Mammary epithelial cell (primary cell): ENCODE measurements at regions of chr2 and their contacts with region 1.

Region 1: GRCh38 chr2:105344704-105345345 is 7.5 kb downstream of the C2orf49 start:
- DNase-seq: no peak
- H3K4me3 ChIP-seq: no peak overlapping the region
- H3K27ac ChIP-seq: no peak overlapping the region
- H3K4me1 ChIP-seq: no peaks in the 10 kb centered on the region
- H3K27me3 ChIP-seq: no peaks in the 10 kb centered on the region
- CTCF ChIP-seq: peak; percentile 33 to 43

Region 2: GRCh38 chr2:105369747-105370690 is 25.2 kb after region 1 on chr2:
- CTCF ChIA-PET with region 1: no interaction called
- dilution Hi-C with region 1: no loop called
- in situ Hi-C with region 1: no loop called
- intact Hi-C with region 1: loop called (anchors 1 kb)
- DNase-seq: peak; percentile 71
- H3K4me3 ChIP-seq: no peak overlapping the region
- H3K27ac ChIP-seq: no peak overlapping the region
- H3K4me1 ChIP-seq: peaks cover 35% of the 10 kb centered on the region
- H3K27me3 ChIP-seq: no peaks in the 10 kb centered on the region
- CTCF ChIP-seq: peak; percentile 81 to 91

Region 3: DNA sequence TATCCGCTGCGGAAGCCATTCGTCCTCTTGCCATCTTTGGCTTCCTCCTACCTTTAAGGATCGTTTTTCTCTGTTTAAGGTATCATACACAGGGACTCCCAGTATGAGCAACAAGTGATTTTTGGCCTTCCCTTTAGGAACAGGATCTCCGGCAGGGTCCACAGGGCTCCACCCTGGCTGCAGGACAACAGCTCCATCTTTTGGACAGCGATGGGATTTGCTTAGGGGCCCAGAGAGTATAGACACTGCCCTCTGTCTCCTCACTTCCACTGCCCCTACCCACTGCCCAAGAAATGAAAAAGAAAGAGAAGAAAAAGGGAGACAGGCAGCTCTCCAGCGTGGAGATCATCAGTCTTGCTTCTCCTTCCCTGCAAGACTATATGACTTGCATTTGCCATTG is 624.7 kb after region 1 on chr2:
- CTCF ChIA-PET with region 1: no interaction called
- dilution Hi-C with region 1: no loop called
- in situ Hi-C with region 1: no loop called
- intact Hi-C with region 1: loop called (anchors 5 kb)
- DNase-seq: peak; percentile 20
- H3K4me3 ChIP-seq: no peak overlapping the region
- H3K27ac ChIP-seq: no peak overlapping the region
- H3K4me1 ChIP-seq: no peaks in the 10 kb centered on the region
- H3K27me3 ChIP-seq: no peaks in the 10 kb centered on the region
- CTCF ChIP-seq: peak; percentile 44 to 50